ENCODE measurements at regions of chr1 and their contacts with region 1.

Region 1: GRCh38 chr1:117753654-117754054 is 147.8 kb downstream of the TENT5C start:
- DNase-seq: no peak
- H3K4me3 Mint-ChIP-seq: no peak overlapping the region
- H3K27ac Mint-ChIP-seq: no peak overlapping the region
- H3K4me1 Mint-ChIP-seq: peaks cover 13% of the 10 kb centered on the region
- H3K27me3 Mint-ChIP-seq: peaks cover 16% of the 10 kb centered on the region

Region 2: GRCh38 chr1:117527566-117528102 is 226.0 kb before region 1 on chr1:
- CTCF ChIA-PET with region 1: interaction called, 244 read pairs
- intact Hi-C with region 1: loop called (anchors 1 kb)
- DNase-seq: no peak
- H3K4me3 Mint-ChIP-seq: no peak overlapping the region
- H3K27ac Mint-ChIP-seq: no peak overlapping the region
- H3K4me1 Mint-ChIP-seq: peaks cover 25% of the 10 kb centered on the region
- H3K27me3 Mint-ChIP-seq: no peaks in the 10 kb centered on the region

Region 3: GRCh38 chr1:117981455-117982192 is 228.0 kb after region 1 on chr1:
- CTCF ChIA-PET with region 1: no interaction called
- intact Hi-C with region 1: no loop called
- DNase-seq: no peak
- H3K4me3 Mint-ChIP-seq: no peak overlapping the region
- H3K27ac Mint-ChIP-seq: no peak overlapping the region
- H3K4me1 Mint-ChIP-seq: no peaks in the 10 kb centered on the region
- H3K27me3 Mint-ChIP-seq: peaks cover 15% of the 10 kb centered on the region

Region 4: DNA sequence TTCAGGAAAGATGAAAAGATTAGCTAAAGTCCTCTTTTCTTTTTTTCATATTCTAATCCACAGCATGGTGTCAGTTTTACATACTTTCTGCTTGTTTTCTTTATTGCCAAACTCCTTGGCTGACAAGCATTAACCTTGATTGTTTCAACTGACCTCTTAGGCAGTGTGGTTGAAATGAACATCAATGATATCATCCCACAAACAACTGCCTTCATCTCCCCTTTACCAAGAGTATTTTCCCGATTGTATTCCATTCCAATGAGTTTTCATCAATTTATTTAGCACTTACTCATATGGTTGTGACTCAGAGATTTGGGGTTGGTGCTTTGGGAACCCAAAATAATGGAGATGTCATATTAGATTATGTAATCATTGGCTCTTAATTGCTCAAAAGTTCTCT is 359.6 kb after region 1 on chr1:
- CTCF ChIA-PET with region 1: no interaction called
- intact Hi-C with region 1: no loop called
- DNase-seq: no peak
- H3K4me3 Mint-ChIP-seq: no peak overlapping the region
- H3K27ac Mint-ChIP-seq: no peak overlapping the region
- H3K4me1 Mint-ChIP-seq: no peaks in the 10 kb centered on the region
- H3K27me3 Mint-ChIP-seq: no peaks in the 10 kb centered on the region